CD4-positive, alpha-beta memory T cell (primary cell): ENCODE measurements at regions of chr15 and their contacts with region 1.

Region 1: GRCh38 chr15:41416742-41417406 is at the start of gene RTF1:
- DNase-seq: peak; percentile 93 to 98 (median 96)
- H3K4me3 ChIP-seq: peak within 1 kb of the TSS; percentile 91 to 100
- H3K4me3 Mint-ChIP-seq: peak within 1 kb of the TSS; percentile 91 to 96 (median 96)
- H3K27ac ChIP-seq: peak within 1 kb of the TSS; percentile 72
- H3K27ac Mint-ChIP-seq: peak within 1 kb of the TSS; percentile 86 to 98 (median 96)
- H3K4me1 ChIP-seq: peaks cover 34% of the 10 kb centered on the region
- H3K4me1 Mint-ChIP-seq: peaks cover 24 to 55% (median 38%) of the 10 kb centered on the region in 4 donors
- H3K27me3 ChIP-seq: no peaks in the 10 kb centered on the region
- H3K27me3 Mint-ChIP-seq: no peaks in the 10 kb centered on the region
- total RNA-seq, gene RTF1: 31.9 to 35.9 TPM

Region 2: GRCh38 chr15:41283653-41284426 is 133.0 kb before region 1 on chr15:
- CTCF ChIA-PET with region 1: no interaction called
- POLR2A ChIA-PET with region 1: no interaction called
- intact Hi-C with region 1: loop called (anchors 5 kb)
- DNase-seq: peak; percentile 97 to 98 (median 98)
- H3K4me3 ChIP-seq: peak overlapping the region; percentile 91 to 97
- H3K4me3 Mint-ChIP-seq: peak overlapping the region; percentile 93 to 99 (median 98)
- H3K27ac ChIP-seq: peak overlapping the region; percentile 86
- H3K27ac Mint-ChIP-seq: peak overlapping the region; percentile 92 to 99 (median 99)
- H3K4me1 ChIP-seq: peaks cover 43% of the 10 kb centered on the region
- H3K4me1 Mint-ChIP-seq: peaks cover 28 to 53% (median 41%) of the 10 kb centered on the region in 4 donors
- H3K27me3 ChIP-seq: no peaks in the 10 kb centered on the region
- H3K27me3 Mint-ChIP-seq: no peaks in the 10 kb centered on the region

Region 3: DNA sequence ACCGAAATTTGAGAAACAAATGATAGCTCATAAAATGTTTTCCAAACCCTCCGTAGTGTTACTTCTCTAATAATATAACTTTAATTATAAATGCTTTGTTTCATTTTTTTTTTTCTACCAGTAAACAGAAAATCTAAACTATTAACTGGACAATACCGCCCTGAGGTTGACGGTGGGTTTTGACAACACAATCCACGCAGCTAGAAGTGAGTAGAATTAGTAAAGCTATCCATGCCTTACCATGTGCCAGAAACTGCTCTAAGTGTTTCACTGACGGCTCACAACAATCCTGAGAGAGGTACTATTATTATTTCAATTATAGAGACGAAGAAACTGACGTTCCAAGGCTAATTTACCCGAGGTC is 15.0 kb before region 1 on chr15:
- CTCF ChIA-PET with region 1: no interaction called
- POLR2A ChIA-PET with region 1: interaction called, 4 read pairs
- intact Hi-C with region 1: loop called (anchors 1 kb)
- DNase-seq: no peak
- H3K4me3 ChIP-seq: peak overlapping the region; percentile 74 to 87
- H3K4me3 Mint-ChIP-seq: peak overlapping the region; percentile 88 to 99 (median 95)
- H3K27ac ChIP-seq: peak overlapping the region; percentile 69
- H3K27ac Mint-ChIP-seq: peak overlapping the region; percentile 92 to 97 (median 96)
- H3K4me1 ChIP-seq: peaks cover 17% of the 10 kb centered on the region
- H3K4me1 Mint-ChIP-seq: peaks cover 8 to 33% (median 15%) of the 10 kb centered on the region in 4 donors
- H3K27me3 ChIP-seq: no peaks in the 10 kb centered on the region
- H3K27me3 Mint-ChIP-seq: no peaks in the 10 kb centered on the region

Region 4: DNA sequence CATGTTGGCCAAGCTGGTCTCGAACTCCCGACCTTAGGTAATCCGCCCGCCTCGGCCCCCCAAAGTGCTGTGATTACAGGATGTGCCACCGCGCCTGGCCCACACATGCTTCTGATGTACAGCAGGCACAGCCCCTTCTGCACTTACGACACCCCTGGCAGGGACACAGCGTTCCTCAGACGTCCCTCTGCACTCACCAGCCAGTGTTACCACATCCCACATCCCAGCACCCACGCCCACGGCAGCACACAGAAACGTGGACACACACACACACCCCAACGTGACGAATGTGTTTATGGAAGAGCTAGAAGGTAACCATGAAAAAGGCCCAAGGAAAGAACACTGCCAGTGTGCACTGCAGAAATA is 127.8 kb after region 1 on chr15:
- CTCF ChIA-PET with region 1: no interaction called
- POLR2A ChIA-PET with region 1: interaction called, 3 read pairs
- intact Hi-C with region 1: loop called (anchors 2 kb)
- DNase-seq: peak in 2 of 5 donors; percentile 7 to 17
- H3K4me3 ChIP-seq: peak overlapping the region in 1 of 2 donors; percentile 86
- H3K4me3 Mint-ChIP-seq: peak overlapping the region; percentile 94 to 97 (median 95)
- H3K27ac ChIP-seq: no peak overlapping the region
- H3K27ac Mint-ChIP-seq: peak overlapping the region; percentile 88 to 98 (median 95)
- H3K4me1 ChIP-seq: peaks cover 12% of the 10 kb centered on the region
- H3K4me1 Mint-ChIP-seq: peaks cover 10 to 27% (median 17%) of the 10 kb centered on the region in 4 donors
- H3K27me3 ChIP-seq: no peaks in the 10 kb centered on the region
- H3K27me3 Mint-ChIP-seq: no peaks in the 10 kb centered on the region